ENCODE measurements at regions of chr14 and their contacts with region 1.

Region 1: DNA sequence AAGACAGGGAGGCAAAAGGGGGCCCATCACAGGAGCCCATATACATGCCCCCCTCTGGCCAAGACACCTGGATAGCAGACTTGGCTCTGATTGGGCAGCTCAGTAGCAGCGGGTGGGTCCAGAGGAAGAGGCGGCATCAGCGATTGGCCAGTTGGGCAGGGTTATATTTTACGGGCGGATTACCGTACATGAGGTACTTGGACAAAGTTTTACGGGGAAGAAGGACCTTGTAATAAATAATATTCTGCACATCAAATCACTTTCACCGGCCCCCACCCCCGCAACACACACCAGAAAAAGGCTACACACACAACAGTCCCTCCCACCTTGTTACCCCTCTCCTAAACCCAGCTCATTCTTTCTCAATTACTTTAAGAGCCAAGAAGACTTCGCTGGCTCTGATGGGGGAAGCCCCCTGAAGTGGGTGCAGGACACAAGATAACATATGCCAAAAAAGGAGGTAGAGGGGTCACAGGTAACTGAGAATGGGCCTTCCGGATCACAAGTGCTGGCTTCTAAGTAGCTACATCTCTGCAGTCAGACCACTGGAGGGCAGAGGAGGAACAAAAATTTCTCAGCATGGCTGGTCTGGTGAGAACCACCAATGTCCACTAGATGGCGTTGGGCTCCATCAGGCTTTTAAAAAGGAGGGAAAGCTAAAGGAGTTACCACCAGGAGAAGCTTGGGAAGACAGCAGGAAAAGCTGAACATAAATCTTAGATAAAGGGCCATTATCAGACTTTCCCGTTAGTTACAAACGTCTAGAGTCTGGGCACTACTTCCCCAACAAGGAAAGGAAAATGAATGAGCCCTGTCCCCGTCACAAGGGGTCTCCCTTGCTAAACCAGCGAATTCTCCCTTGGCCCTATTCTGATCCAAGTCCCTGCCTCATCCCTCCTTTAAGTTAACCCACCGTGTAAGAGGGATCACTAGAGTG is 11.4 kb upstream of the CDH24 start:
- DNase-seq: peak; percentile 93
- H3K4me3 Mint-ChIP-seq: peak overlapping the region; percentile 50
- H3K27ac Mint-ChIP-seq: no peak overlapping the region
- H3K4me1 Mint-ChIP-seq: peaks cover 26% of the 10 kb centered on the region
- H3K27me3 Mint-ChIP-seq: no peaks in the 10 kb centered on the region
- CTCF ChIP-seq: peak; percentile 94

Region 2: GRCh38 chr14:22973217-22974032 is 95.3 kb before region 1 on chr14:
- CTCF ChIA-PET with region 1: interaction called, 86 read pairs
- POLR2A ChIA-PET with region 1: interaction called, 133 read pairs
- intact Hi-C with region 1: no loop called
- DNase-seq: peak; percentile 78
- H3K4me3 Mint-ChIP-seq: peak overlapping the region; percentile 50
- H3K27ac Mint-ChIP-seq: peak overlapping the region; percentile 51
- H3K4me1 Mint-ChIP-seq: peaks cover 51% of the 10 kb centered on the region
- H3K27me3 Mint-ChIP-seq: no peaks in the 10 kb centered on the region
- CTCF ChIP-seq: peak; percentile 65

Region 3: DNA sequence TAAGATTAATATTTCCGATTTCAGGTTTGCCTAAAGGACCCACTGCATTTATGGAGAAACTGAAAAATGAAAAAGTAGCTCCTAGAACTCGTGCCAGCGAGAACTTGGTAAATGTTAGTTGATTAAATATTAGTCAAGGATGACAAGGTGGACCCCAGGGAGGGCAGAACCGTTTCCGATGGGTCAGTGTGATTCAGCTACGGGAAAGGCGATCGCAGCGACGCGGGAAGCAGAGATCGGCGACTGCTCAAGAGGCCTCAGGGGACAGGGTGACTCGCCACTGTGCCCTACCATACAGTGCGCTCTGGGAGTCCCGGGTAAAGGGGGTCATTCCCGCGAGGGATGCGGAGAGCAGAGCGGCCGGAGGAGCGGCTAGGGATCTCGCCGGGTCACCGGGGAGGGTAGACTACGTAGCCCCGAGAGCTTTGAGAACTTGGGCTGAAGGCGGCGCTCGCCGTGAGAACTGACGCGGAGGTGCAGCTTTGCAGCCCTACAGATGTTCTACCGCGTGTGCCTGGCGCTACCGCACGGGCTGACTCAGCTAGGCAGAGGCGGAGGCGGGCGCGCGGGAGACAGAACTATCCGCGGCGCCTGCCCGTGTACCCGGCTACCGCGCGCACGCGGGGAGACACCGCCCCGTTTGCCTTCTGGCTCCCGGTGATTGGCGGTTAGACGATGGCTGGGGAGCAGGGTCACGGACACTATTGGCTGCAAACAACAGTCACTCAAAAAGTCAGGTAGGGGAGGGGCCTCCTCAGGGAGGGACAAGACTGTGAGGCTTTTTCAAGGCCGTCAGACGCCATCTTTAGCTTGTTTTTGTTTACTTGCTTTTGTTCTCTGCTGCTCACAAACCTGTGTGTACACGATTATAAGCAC is 62.0 kb before region 1 on chr14:
- CTCF ChIA-PET with region 1: interaction called, 620 read pairs
- POLR2A ChIA-PET with region 1: interaction called, 9 read pairs
- intact Hi-C with region 1: no loop called
- DNase-seq: peak; percentile 98
- H3K4me3 Mint-ChIP-seq: peak overlapping the region; percentile 94
- H3K27ac Mint-ChIP-seq: peak overlapping the region; percentile 99
- H3K4me1 Mint-ChIP-seq: peaks cover 38% of the 10 kb centered on the region
- H3K27me3 Mint-ChIP-seq: no peaks in the 10 kb centered on the region
- CTCF ChIP-seq: peak; percentile 15

Region 4: DNA sequence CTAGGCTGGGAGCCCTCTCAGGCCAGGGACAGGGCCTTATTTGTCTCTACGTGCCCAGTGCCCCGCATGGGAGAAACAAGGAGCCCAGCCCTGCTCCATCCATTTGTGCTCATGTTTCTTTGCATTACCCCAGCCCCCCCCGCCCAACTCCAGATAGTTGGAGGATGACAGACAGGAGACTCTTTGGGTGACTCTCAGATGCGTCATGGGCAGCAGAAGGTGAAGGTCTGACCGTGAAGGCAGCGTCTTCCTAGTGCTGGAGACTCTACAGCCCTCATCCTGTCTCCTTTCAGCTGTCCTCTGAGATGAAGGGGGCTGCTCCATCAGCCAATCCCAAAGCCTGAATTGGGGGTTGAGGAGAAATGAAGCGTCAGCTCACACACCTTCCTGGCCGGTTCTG is 27.0 kb before region 1 on chr14:
- CTCF ChIA-PET with region 1: interaction called, 13 read pairs
- POLR2A ChIA-PET with region 1: no interaction called
- intact Hi-C with region 1: no loop called
- DNase-seq: no peak
- H3K4me3 Mint-ChIP-seq: no peak overlapping the region
- H3K27ac Mint-ChIP-seq: no peak overlapping the region
- H3K4me1 Mint-ChIP-seq: no peaks in the 10 kb centered on the region
- H3K27me3 Mint-ChIP-seq: no peaks in the 10 kb centered on the region
- CTCF ChIP-seq: no peak

Region 5: DNA sequence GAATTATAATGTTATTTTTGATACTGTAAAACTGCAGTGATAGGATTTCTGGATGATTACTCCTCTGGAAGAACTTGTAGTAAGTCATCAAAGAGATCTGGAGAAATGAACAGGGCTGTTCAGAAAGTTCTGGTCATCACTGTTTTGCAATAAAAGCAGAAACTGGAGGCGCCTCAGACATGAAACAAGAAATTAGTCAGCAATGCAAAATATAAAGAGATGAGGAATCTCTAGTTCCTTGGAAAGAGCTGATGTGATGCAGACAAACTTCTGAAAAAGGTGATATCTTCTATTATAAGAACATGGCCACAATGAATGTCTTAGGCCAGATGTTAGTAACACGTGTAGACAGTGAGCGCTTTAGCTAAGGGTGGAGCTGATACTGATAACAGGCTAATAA is 16.7 kb after region 1 on chr14:
- CTCF ChIA-PET with region 1: interaction called, 110 read pairs
- POLR2A ChIA-PET with region 1: interaction called, 6 read pairs
- intact Hi-C with region 1: no loop called
- DNase-seq: no peak
- H3K4me3 Mint-ChIP-seq: no peak overlapping the region
- H3K27ac Mint-ChIP-seq: no peak overlapping the region
- H3K4me1 Mint-ChIP-seq: peaks cover 11% of the 10 kb centered on the region
- H3K27me3 Mint-ChIP-seq: no peaks in the 10 kb centered on the region
- CTCF ChIP-seq: no peak

Region 6: GRCh38 chr14:23109769-23110168 is 41.0 kb after region 1 on chr14:
- CTCF ChIA-PET with region 1: interaction called, 41 read pairs
- POLR2A ChIA-PET with region 1: interaction called, 4 read pairs
- intact Hi-C with region 1: loop called (anchors 1 kb)
- DNase-seq: no peak
- H3K4me3 Mint-ChIP-seq: no peak overlapping the region
- H3K27ac Mint-ChIP-seq: no peak overlapping the region
- H3K4me1 Mint-ChIP-seq: peaks cover 5% of the 10 kb centered on the region
- H3K27me3 Mint-ChIP-seq: no peaks in the 10 kb centered on the region
- CTCF ChIP-seq: no peak

Region 7: GRCh38 chr14:23114669-23115491 is 46.1 kb after region 1 on chr14:
- CTCF ChIA-PET with region 1: interaction called, 41 read pairs
- POLR2A ChIA-PET with region 1: no interaction called
- intact Hi-C with region 1: no loop called
- DNase-seq: peak; percentile 87
- H3K4me3 Mint-ChIP-seq: no peak overlapping the region
- H3K27ac Mint-ChIP-seq: peak overlapping the region; percentile 77
- H3K4me1 Mint-ChIP-seq: peaks cover 16% of the 10 kb centered on the region
- H3K27me3 Mint-ChIP-seq: no peaks in the 10 kb centered on the region
- CTCF ChIP-seq: no peak